ENCODE measurements at regions of chr2 and their contacts with region 1.

Region 1: GRCh38 chr2:105834931-105835330 is 90.2 kb downstream of the NCK2 start:
- DNase-seq: peak; percentile 83
- ATAC-seq: peak; percentile 83
- H3K4me3 ChIP-seq: peak overlapping the region in 2 of 5 experiments; percentile 13 to 46
- H3K4me3 Mint-ChIP-seq: peak overlapping the region; percentile 30
- H3K27ac ChIP-seq: peak overlapping the region; percentile 90 to 92
- H3K27ac Mint-ChIP-seq: peak overlapping the region; percentile 78
- H3K4me1 ChIP-seq: peaks cover 44 to 49% of the 10 kb centered on the region in 2 donors
- H3K4me1 Mint-ChIP-seq: peaks cover 65% of the 10 kb centered on the region
- H3K27me3 ChIP-seq: no peaks in the 10 kb centered on the region
- H3K27me3 Mint-ChIP-seq: no peaks in the 10 kb centered on the region
- CTCF ChIP-seq: no peak

Region 2: DNA sequence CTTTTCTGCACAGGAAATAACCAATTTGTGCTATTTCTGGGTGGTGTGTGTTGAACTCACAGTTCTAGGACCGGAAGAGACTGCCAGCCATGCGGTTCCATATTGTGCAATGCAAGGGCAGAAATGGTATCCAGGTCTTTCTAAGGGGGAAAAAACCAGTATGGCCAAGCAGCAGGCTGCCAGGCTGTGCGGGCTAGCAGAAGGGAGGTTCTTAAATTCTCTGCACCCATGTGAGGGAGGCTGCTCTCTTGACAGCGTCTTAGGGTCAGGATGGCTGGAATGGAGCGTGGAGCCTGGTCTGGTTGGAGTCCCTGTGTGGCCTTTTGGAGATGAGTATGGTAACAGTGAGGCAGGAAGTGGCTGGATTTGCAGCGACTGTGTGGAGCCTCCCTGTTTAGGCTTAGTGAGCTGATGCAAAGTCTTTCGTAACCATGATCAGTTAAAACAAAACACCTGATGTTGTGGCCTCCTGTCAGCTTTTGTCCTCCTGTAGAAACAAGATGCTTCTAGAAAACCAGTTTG is 37.6 kb before region 1 on chr2:
- CTCF ChIA-PET with region 1: no interaction called
- POLR2A ChIA-PET with region 1: no interaction called
- intact Hi-C with region 1: loop called (anchors 1 kb)
- DNase-seq: peak; percentile 46
- ATAC-seq: no peak
- H3K4me3 ChIP-seq: peak overlapping the region; percentile 10 to 49 (median 16)
- H3K4me3 Mint-ChIP-seq: peak overlapping the region; percentile 75
- H3K27ac ChIP-seq: peak overlapping the region; percentile 86 to 92
- H3K27ac Mint-ChIP-seq: peak overlapping the region; percentile 94
- H3K4me1 ChIP-seq: peaks cover 91 to 94% of the 10 kb centered on the region in 2 donors
- H3K4me1 Mint-ChIP-seq: peaks cover 85% of the 10 kb centered on the region
- H3K27me3 ChIP-seq: no peaks in the 10 kb centered on the region
- H3K27me3 Mint-ChIP-seq: no peaks in the 10 kb centered on the region
- CTCF ChIP-seq: no peak

Region 3: DNA sequence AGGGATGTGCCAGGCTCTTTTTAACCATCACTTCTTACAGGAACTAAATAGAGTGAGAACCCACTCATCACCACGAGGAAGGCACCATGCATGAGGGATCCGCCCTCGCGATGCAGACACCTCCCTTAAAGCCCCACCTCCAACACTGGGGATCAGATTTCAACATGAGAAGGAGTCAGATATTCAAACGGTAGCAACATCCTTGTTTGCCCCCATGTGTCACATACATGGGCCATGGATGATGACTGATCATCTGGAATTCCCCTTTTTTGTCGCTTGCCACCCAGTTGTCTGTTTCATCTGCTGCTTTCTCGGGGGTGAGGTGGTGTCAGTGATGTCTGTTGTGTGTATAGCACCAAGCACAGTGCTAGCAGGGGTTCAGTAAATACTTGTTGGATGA is 32.3 kb before region 1 on chr2:
- CTCF ChIA-PET with region 1: no interaction called
- POLR2A ChIA-PET with region 1: no interaction called
- intact Hi-C with region 1: loop called (anchors 1 kb)
- DNase-seq: peak; percentile 86
- ATAC-seq: peak; percentile 75
- H3K4me3 ChIP-seq: peak overlapping the region in 1 of 5 experiments; percentile 16
- H3K4me3 Mint-ChIP-seq: peak overlapping the region; percentile 66
- H3K27ac ChIP-seq: peak overlapping the region; percentile 86 to 92
- H3K27ac Mint-ChIP-seq: peak overlapping the region; percentile 94
- H3K4me1 ChIP-seq: peaks cover 81 to 84% of the 10 kb centered on the region in 2 donors
- H3K4me1 Mint-ChIP-seq: peaks cover 85% of the 10 kb centered on the region
- H3K27me3 ChIP-seq: no peaks in the 10 kb centered on the region
- H3K27me3 Mint-ChIP-seq: no peaks in the 10 kb centered on the region
- CTCF ChIP-seq: no peak

Region 4: GRCh38 chr2:105866216-105867185 is 31.6 kb after region 1 on chr2:
- CTCF ChIA-PET with region 1: no interaction called
- POLR2A ChIA-PET with region 1: no interaction called
- intact Hi-C with region 1: loop called (anchors 5 kb)
- DNase-seq: no peak
- ATAC-seq: no peak
- H3K4me3 ChIP-seq: no peak overlapping the region
- H3K4me3 Mint-ChIP-seq: no peak overlapping the region
- H3K27ac ChIP-seq: no peak overlapping the region
- H3K27ac Mint-ChIP-seq: no peak overlapping the region
- H3K4me1 ChIP-seq: peaks cover 22 to 36% of the 10 kb centered on the region in 2 donors
- H3K4me1 Mint-ChIP-seq: peaks cover 71% of the 10 kb centered on the region
- H3K27me3 ChIP-seq: no peaks in the 10 kb centered on the region
- H3K27me3 Mint-ChIP-seq: no peaks in the 10 kb centered on the region
- CTCF ChIP-seq: no peak

Measured in B cell (primary cell).